ENCODE measurements at regions of chr12 and their contacts with region 1.

Region 1: GRCh38 chr12:101439236-101439635 is 31.7 kb upstream of the ARL1 start:
- DNase-seq: no peak
- ATAC-seq: no peak
- H3K4me3 ChIP-seq: no peak overlapping the region
- H3K4me3 Mint-ChIP-seq: no peak overlapping the region
- H3K27ac ChIP-seq: no peak overlapping the region
- H3K27ac Mint-ChIP-seq: no peak overlapping the region
- H3K4me1 ChIP-seq: no peaks in the 10 kb centered on the region
- H3K4me1 Mint-ChIP-seq: no peaks in the 10 kb centered on the region
- H3K27me3 ChIP-seq: peaks cover 0 to 6% of the 10 kb centered on the region in 2 experiments
- H3K27me3 Mint-ChIP-seq: peaks cover 0 to 4% of the 10 kb centered on the region in 2 donors

Region 2: DNA sequence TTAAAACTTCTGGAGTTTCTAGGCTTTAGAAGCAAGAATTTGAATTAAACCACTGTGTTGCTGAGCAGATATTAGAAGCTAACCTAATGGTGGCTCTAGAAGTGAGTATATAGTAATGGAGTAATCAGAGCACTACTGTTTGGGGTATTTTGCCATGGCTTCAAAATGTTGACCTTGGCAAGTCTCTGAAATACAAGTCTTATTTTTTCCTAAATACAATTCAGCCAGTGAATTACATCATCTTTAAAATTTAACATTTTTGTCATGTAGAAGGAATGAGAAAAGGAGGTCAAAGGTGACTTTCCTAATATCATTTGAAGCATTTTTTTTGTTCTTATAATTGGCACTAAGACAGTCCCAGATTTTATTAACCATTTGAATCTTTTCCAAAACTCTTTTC is 733.2 kb after region 1 on chr12:
- CTCF ChIA-PET with region 1: interaction called in 1 of 2 experiments, 11 read pairs
- POLR2A ChIA-PET with region 1: no interaction called
- DNase-seq: no peak
- ATAC-seq: no peak
- H3K4me3 ChIP-seq: no peak overlapping the region
- H3K4me3 Mint-ChIP-seq: no peak overlapping the region
- H3K27ac ChIP-seq: no peak overlapping the region
- H3K27ac Mint-ChIP-seq: no peak overlapping the region
- H3K4me1 ChIP-seq: no peaks in the 10 kb centered on the region
- H3K4me1 Mint-ChIP-seq: no peaks in the 10 kb centered on the region
- H3K27me3 ChIP-seq: no peaks in the 10 kb centered on the region
- H3K27me3 Mint-ChIP-seq: no peaks in the 10 kb centered on the region

Measured in T-cell (primary cell).